H1 (cell line): ENCODE measurements at regions of chr2 and their contacts with region 1.

Region 1: GRCh38 chr2:189751080-189751658 is 11.4 kb downstream of the OSGEPL1 start:
- DNase-seq: peak in 1 of 2 experiments; percentile 50
- H3K4me3 ChIP-seq: no peak overlapping the region
- H3K27ac ChIP-seq: no peak overlapping the region
- H3K4me1 ChIP-seq: no peaks in the 10 kb centered on the region
- H3K27me3 ChIP-seq: no peaks in the 10 kb centered on the region
- CTCF ChIP-seq: peak in 2 of 3 experiments; percentile 59 to 72; a peak in 3 of 4 replicates
- EP300 ChIP-seq: no peak
- POLR2A ChIP-seq: no peak
- RAD21 ChIP-seq: peak; percentile 62 to 63

Region 2: DNA sequence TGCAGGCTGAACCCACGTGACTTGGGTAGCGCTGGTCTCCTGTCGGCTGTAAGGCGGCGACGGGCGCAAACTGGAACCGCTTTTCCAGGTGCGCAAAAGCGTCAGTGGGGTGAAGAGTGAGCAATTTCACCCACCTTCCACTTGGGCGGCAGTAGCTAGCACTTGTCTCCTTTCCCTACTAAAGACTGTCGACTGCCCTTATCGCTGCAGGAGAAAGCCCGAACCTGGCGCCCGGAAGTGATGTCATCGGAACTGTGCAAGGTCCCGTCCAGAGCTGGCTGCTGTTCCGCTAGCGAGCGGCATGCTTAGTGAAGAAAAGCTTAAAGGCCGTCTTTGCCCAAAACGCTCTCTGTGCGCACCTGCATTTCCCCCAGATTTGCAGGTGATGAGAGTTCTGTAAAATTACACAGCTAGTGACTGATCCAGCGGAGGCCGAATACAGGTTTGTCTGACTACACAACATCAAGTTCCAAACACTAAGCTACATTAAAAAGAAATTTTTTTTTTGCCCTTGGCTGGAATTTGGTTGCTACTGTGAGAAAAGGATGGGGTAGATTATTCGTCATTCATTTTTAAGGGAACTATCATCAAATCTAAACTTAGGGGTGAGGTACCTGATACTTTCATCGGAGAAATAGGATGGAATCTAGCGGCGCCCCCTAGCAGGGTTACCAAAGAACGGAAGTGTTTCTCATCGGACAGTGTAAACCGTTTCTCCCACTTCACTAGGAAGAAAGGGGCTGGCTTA is 11.6 kb after region 1 on chr2 and contains the start of gene OSGEPL1:
- CTCF ChIA-PET with region 1: interaction called, 21 read pairs
- POLR2A ChIA-PET with region 1: interaction called, 6 read pairs
- DNase-seq: peak; percentile 87 to 91
- H3K4me3 ChIP-seq: peak within 1 kb of the TSS; percentile 81 to 91 (median 88)
- H3K27ac ChIP-seq: peak within 1 kb of the TSS; percentile 85
- H3K4me1 ChIP-seq: no peaks in the 10 kb centered on the region; a peak in 1 of 7 replicates
- H3K27me3 ChIP-seq: no peaks in the 10 kb centered on the region
- CTCF ChIP-seq: peak; percentile 15 to 68 (median 36); a peak in 3 of 4 replicates
- EP300 ChIP-seq: no peak
- POLR2A ChIP-seq: peak; percentile 49 to 95
- RAD21 ChIP-seq: peak in 1 of 2 experiments; percentile 9; a peak in 1 of 4 replicates
- total RNA-seq, gene OSGEPL1: 11.8 and 15.7 TPM in 2 replicates

Region 3: DNA sequence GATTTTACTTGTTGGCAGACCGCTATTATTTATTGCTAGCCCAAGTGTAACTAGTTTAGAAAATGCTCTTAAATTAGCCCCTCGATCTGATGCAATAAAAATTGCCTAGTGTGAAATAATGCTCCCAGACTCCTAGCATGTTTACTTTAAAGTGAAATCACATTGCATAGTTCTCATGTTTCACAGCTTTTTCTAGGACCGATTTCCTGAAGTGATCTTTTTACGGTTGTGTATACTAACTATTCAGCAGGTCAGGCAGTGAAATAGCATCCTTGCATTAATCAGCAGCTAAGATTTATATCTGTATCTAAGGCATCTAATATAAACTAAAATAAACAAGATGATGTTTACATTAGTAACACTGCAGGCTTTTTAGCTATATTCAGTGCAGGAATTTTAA is 85.5 kb after region 1 on chr2:
- CTCF ChIA-PET with region 1: no interaction called
- POLR2A ChIA-PET with region 1: no interaction called
- DNase-seq: no peak
- H3K4me3 ChIP-seq: no peak overlapping the region
- H3K27ac ChIP-seq: no peak overlapping the region
- H3K4me1 ChIP-seq: no peaks in the 10 kb centered on the region
- H3K27me3 ChIP-seq: no peaks in the 10 kb centered on the region
- CTCF ChIP-seq: no peak
- EP300 ChIP-seq: no peak
- POLR2A ChIP-seq: no peak
- RAD21 ChIP-seq: no peak

Region 4: GRCh38 chr2:190069936-190070696 is 318.9 kb after region 1 on chr2:
- CTCF ChIA-PET with region 1: interaction called, 11 read pairs
- POLR2A ChIA-PET with region 1: no interaction called
- DNase-seq: no peak
- H3K4me3 ChIP-seq: no peak overlapping the region
- H3K27ac ChIP-seq: no peak overlapping the region
- H3K4me1 ChIP-seq: no peaks in the 10 kb centered on the region
- H3K27me3 ChIP-seq: no peaks in the 10 kb centered on the region
- CTCF ChIP-seq: peak in 2 of 3 experiments; percentile 20 to 39; a peak in 2 of 4 replicates
- EP300 ChIP-seq: no peak
- POLR2A ChIP-seq: no peak
- RAD21 ChIP-seq: peak; percentile 64 to 66